Esophagus muscularis mucosa (tissue), 4 donors: ENCODE measurements at regions of chr14 and their contacts with region 1.

Region 1: DNA sequence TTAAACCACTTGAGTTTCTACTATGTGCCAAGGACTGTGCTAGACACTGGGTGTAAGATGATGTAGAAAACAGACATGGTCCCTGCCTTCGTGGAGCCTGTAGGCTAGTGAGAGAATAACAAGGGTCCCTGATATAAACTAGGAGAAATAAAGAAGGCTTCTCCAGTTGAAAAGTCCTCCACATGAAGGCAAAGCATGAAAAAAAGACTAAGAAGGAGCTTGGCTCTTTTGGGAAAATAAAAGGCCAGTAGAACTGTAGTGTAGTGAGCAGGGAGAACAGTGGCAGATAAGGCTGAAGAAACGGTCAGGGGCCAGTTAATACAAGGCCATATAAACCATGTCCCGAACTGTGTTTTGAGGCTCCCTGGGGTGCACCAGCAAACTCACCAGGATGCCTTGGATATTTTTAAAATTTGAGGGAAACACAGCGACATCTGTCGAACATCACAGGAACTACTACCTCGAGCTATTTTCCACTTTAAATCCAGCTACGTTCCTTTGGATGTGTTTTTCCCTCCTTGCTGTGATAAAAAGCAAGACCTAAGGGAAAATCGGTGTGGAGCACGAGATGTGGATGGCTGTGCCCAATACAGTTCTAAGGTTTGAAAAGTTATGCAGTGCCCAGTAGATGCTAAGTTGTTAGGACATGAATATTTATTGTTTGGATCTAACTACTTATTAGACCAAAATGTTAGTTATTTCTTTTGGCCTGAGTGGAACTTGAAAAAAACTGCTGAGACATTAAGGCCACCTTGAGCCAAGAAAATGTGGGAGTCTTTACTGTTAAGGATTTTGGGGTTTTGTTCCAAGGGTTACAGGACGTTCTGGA is 8.5 kb upstream of the CFL2 start:
- DNase-seq: no peak
- H3K4me3 ChIP-seq: no peak overlapping the region
- H3K27ac ChIP-seq: no peak overlapping the region
- H3K4me1 ChIP-seq: peaks cover 0 to 12% (median 9%) of the 10 kb centered on the region in 4 donors
- H3K27me3 ChIP-seq: no peaks in the 10 kb centered on the region
- CTCF ChIP-seq: peak; percentile 83 to 87 (median 85)
- EP300 ChIP-seq: no peak
- POLR2A ChIP-seq: no peak

Region 2: DNA sequence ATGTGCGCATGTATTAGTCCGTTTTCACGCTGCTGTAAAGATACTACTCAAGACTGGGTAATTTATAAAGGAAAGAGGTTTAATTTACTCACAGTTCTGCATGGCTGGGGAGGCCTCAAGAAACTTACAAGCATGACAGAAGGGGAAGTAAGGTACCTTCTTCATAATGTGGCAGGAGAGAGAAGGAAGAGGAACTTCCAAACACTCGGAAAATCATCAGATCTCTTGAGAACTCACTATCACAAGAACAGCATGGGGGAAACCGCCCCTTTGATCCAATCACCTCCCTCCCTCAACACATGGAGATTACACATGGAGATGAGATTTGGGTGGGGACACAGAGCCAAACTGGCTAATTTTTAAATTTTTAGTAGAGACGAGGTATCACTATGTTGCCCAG is 51.2 kb before region 1 on chr14:
- intact Hi-C with region 1: loop called (anchors 1 kb)
- DNase-seq: no peak
- H3K4me3 ChIP-seq: no peak overlapping the region
- H3K27ac ChIP-seq: no peak overlapping the region
- H3K4me1 ChIP-seq: peaks cover 0 to 6% (median 0%) of the 10 kb centered on the region in 4 donors
- H3K27me3 ChIP-seq: no peaks in the 10 kb centered on the region
- CTCF ChIP-seq: no peak
- EP300 ChIP-seq: no peak
- POLR2A ChIP-seq: no peak

Region 3: DNA sequence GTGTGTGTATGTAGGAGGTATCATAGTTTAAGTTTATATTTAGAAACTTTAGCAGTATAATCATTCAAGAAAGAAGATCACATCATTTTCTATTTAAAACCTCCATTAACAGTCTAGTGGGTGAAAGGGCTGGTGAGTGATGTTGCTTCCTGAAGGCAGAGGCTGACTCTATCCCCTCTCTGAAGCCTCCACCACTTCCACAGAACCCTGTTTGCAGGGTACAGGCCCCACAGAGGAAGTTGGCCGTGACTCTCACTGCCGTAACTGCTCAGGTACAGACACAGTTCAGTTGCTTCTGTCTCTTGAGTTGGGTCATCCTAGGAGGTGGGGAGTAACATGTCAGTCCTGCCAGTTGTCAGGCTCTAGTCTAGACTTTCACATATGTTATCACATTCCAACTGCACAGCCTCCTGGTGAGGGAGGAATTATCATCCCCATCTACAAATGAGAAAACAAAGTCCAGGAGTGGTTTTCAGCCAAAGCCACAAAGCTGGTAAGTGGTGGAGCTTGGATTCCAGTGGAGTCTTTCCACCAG is 40.1 kb before region 1 on chr14:
- intact Hi-C with region 1: no loop called
- DNase-seq: no peak
- H3K4me3 ChIP-seq: no peak overlapping the region
- H3K27ac ChIP-seq: no peak overlapping the region
- H3K4me1 ChIP-seq: peaks cover 0 to 3% (median 0%) of the 10 kb centered on the region in 4 donors
- H3K27me3 ChIP-seq: no peaks in the 10 kb centered on the region
- CTCF ChIP-seq: no peak
- EP300 ChIP-seq: no peak
- POLR2A ChIP-seq: no peak